ENCODE measurements at regions of chr1 and their contacts with region 1.

Region 1: GRCh38 chr1:108559215-108560186 is at the start of gene EEIG2:
- DNase-seq: peak; percentile 58
- ATAC-seq: peak; percentile 72
- H3K4me3 ChIP-seq: peak within 1 kb of the TSS; percentile 84
- H3K27ac ChIP-seq: peak within 1 kb of the TSS; percentile 75
- H3K4me1 ChIP-seq: peaks cover 29% of the 10 kb centered on the region
- H3K27me3 ChIP-seq: no peaks in the 10 kb centered on the region
- CTCF ChIP-seq: peak; percentile 66 to 82 (median 71); a peak in 5 of 6 replicates
- EP300 ChIP-seq: peak in 1 of 2 experiments; percentile 47; a peak in 1 of 4 replicates
- POLR2A ChIP-seq: peak; percentile 43; the same call in 1 of the 2 replicates
- RAD21 ChIP-seq: peak; percentile 35; the same call in 1 of the 2 replicates
- polyA plus RNA-seq, gene EEIG2: 3.5 to 4.9 TPM

Region 2: DNA sequence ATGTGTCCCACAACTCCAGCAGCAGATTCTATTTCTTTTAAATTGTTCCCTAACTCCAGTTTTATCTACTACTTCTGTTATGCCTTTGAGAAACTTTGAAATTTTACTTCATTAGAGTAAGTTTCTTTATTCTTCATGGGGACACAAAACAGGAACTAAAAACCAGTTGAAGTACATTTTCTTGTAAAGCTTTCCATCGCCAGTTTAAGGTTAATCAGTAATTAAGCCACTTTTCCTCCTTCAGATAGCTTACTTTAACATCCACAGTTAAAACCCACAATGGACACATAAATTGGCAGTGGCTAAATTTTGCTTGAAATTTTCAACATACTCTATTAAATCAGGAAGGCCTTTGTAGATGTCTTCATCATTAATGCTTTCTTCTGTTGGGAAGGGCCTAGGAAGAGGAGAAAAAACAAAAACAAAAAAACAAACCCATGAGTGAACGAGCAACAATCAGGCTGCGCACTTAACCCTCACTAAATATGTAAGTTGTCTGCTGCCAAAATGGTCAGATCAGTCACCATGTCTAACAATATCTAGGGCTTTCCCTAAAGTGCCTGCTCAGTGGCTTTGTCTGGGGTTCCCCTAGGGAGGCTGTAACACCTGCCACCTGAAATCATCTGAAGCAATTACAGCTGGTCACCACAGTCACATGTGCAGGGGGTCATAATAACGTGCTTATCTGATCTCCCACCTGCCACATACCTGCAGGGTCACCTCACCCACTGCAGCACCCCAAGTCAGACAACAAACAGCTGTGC is 782.4 kb before region 1 on chr1:
- CTCF ChIA-PET with region 1: interaction called, 7 read pairs
- POLR2A ChIA-PET with region 1: no interaction called
- RAD21 ChIA-PET with region 1: interaction called, 8 read pairs
- SMC1A ChIA-PET with region 1: no interaction called
- in situ Hi-C with region 1: no loop called
- intact Hi-C with region 1: loop called (anchors 5 kb)
- DNase-seq: peak; percentile 64
- ATAC-seq: peak; percentile 95
- H3K4me3 ChIP-seq: peak overlapping the region; percentile 6; the same call in 1 of the 2 replicates
- H3K27ac ChIP-seq: peak overlapping the region; percentile 61
- H3K4me1 ChIP-seq: peaks cover 11% of the 10 kb centered on the region
- H3K27me3 ChIP-seq: no peaks in the 10 kb centered on the region
- CTCF ChIP-seq: no peak
- EP300 ChIP-seq: peak; percentile 79 to 83; a peak in 3 of 4 replicates
- POLR2A ChIP-seq: no peak
- RAD21 ChIP-seq: no peak

Region 3: DNA sequence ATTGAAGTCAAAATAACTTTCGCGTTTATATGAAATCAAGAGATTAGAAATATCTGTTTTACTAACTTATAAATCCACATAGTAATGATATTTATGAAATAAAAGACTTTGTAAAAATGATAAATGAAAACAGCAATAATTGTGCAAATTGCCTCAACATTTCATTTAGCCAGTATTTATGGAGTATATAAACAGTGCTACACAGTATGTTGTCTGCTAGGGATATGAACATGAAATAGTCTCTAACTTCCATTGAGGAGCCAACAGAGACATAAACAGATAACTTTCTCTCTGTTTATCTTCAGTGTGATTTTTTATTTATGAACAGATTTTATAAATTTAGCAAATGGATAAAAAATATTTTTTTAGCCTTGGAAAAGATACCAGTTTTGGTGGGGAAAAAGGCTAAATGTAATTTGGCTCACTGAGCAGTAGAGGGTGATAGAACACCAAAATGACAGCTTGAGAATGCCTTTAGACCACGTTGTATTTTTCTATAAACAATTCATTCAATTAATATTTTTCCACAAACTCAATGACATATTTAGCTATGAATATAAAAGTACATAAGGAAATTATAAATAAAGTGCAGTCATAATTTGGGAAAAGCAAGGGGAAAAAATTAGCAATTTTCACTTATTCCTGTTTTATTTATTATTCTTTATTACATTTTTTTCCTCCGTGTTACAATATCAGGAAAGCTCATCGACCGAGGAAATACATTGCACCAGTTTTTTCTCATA is 47.1 kb before region 1 on chr1:
- CTCF ChIA-PET with region 1: interaction called, 258 read pairs
- POLR2A ChIA-PET with region 1: interaction called, 3 read pairs
- RAD21 ChIA-PET with region 1: interaction called, 92 read pairs
- SMC1A ChIA-PET with region 1: interaction called, 161 read pairs
- in situ Hi-C with region 1: loop called (anchors 5 kb)
- intact Hi-C with region 1: loop called (anchors 1 kb)
- DNase-seq: no peak
- ATAC-seq: peak; percentile 61; the same call in 2 of the 3 replicates
- H3K4me3 ChIP-seq: no peak overlapping the region
- H3K27ac ChIP-seq: no peak overlapping the region
- H3K4me1 ChIP-seq: no peaks in the 10 kb centered on the region
- H3K27me3 ChIP-seq: no peaks in the 10 kb centered on the region
- CTCF ChIP-seq: peak; percentile 69 to 91 (median 76)
- EP300 ChIP-seq: no peak
- POLR2A ChIP-seq: no peak
- RAD21 ChIP-seq: peak; percentile 95

Region 4: DNA sequence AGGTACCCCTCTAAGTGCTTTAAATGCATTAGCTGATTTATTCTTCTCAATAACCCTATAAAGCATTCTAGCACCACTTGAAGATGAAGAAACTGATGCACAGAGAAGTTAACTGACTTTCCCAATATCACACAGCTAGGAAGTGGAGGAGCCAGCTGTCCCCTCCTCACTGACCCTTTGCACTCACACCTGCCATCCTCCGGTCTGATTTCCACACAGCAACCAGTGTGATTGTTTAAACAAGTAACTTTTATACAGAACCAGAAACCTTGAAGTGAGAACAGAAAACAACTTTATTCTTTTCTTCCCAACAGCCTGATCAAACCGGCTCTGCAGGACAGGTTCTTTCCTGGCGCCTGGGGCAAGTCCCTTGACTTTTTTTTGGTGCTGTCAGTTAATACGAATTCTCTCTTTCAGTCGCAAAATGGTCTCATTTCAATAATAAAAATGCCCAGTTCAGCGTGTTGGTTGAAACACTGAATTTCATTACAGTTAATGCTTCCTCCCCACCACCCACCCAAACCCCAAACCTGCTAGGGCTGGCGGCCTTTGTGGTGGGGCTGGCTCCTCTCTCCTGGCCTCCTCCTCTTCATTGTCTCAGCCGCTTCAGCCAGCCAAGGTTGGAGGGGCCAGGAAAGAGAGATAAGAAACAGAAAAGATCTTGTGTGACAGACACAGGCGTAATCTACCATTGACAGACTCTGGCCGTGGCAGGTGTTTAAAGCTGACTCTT is 26.0 kb before region 1 on chr1:
- CTCF ChIA-PET with region 1: interaction called, 47 read pairs
- POLR2A ChIA-PET with region 1: interaction called, 7 read pairs
- RAD21 ChIA-PET with region 1: interaction called, 33 read pairs
- SMC1A ChIA-PET with region 1: interaction called, 56 read pairs
- in situ Hi-C with region 1: no loop called
- intact Hi-C with region 1: loop called (anchors 2 kb)
- DNase-seq: peak; percentile 40
- ATAC-seq: peak; percentile 80
- H3K4me3 ChIP-seq: no peak overlapping the region
- H3K27ac ChIP-seq: no peak overlapping the region
- H3K4me1 ChIP-seq: peaks cover 6% of the 10 kb centered on the region
- H3K27me3 ChIP-seq: no peaks in the 10 kb centered on the region
- CTCF ChIP-seq: 0 out of 6 replicates have a peak, but pooled peaks of 1 of the 3 experiments have one; percentile 8
- EP300 ChIP-seq: 0 out of 4 replicates have a peak, but pooled peaks of 1 of the 2 experiments have one; percentile 58
- POLR2A ChIP-seq: no peak
- RAD21 ChIP-seq: 0 out of 2 replicates have a peak, but pooled peaks have one; percentile 12

Region 5: GRCh38 chr1:108615544-108615943 is 56.0 kb after region 1 on chr1:
- CTCF ChIA-PET with region 1: interaction called, 12 read pairs
- POLR2A ChIA-PET with region 1: no interaction called
- RAD21 ChIA-PET with region 1: interaction called, 3 read pairs
- SMC1A ChIA-PET with region 1: no interaction called
- in situ Hi-C with region 1: no loop called
- intact Hi-C with region 1: no loop called
- DNase-seq: no peak
- ATAC-seq: no peak
- H3K4me3 ChIP-seq: no peak overlapping the region
- H3K27ac ChIP-seq: no peak overlapping the region
- H3K4me1 ChIP-seq: no peaks in the 10 kb centered on the region
- H3K27me3 ChIP-seq: no peaks in the 10 kb centered on the region
- CTCF ChIP-seq: no peak
- EP300 ChIP-seq: no peak
- POLR2A ChIP-seq: no peak
- RAD21 ChIP-seq: no peak

Region 6: GRCh38 chr1:108661030-108661620 is 101.6 kb after region 1 on chr1 and contains the start of gene HENMT1:
- CTCF ChIA-PET with region 1: interaction called, 3 read pairs
- POLR2A ChIA-PET with region 1: no interaction called
- RAD21 ChIA-PET with region 1: no interaction called
- SMC1A ChIA-PET with region 1: no interaction called
- in situ Hi-C with region 1: no loop called
- intact Hi-C with region 1: loop called (anchors 5 kb)
- DNase-seq: peak; percentile 23
- ATAC-seq: peak; percentile 91
- H3K4me3 ChIP-seq: peak within 1 kb of the TSS; percentile 62
- H3K27ac ChIP-seq: peak within 1 kb of the TSS; percentile 82
- H3K4me1 ChIP-seq: peaks cover 10% of the 10 kb centered on the region; the same call in 1 of the 2 replicates
- H3K27me3 ChIP-seq: no peaks in the 10 kb centered on the region
- CTCF ChIP-seq: no peak
- EP300 ChIP-seq: 0 out of 4 replicates have a peak, but pooled peaks of 1 of the 2 experiments have one; percentile 10
- POLR2A ChIP-seq: peak; percentile 93
- RAD21 ChIP-seq: no peak
- polyA plus RNA-seq, gene HENMT1: 13.6 to 15.2 TPM

Region 7: DNA sequence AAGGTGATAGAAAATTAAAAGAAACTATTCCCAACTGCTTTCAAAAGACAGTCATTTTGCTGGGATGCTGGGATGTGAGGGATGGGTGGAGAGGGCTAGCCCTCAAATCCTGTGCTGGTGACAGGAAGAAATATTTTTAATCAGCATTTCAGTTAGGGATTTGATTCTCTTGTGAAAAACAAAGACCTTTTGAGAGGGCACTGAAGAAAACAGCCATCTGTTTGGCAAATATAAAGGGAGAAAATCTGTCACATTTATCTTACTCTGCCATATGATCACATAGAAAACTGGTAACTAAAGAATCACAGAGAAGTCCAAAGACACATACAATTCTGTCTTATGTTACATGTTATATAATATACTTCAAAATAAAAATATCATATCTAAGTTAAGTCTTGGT is 199.3 kb after region 1 on chr1:
- CTCF ChIA-PET with region 1: no interaction called
- POLR2A ChIA-PET with region 1: no interaction called
- RAD21 ChIA-PET with region 1: no interaction called
- SMC1A ChIA-PET with region 1: no interaction called
- in situ Hi-C with region 1: no loop called
- intact Hi-C with region 1: no loop called
- DNase-seq: no peak
- ATAC-seq: no peak
- H3K4me3 ChIP-seq: no peak overlapping the region
- H3K27ac ChIP-seq: no peak overlapping the region
- H3K4me1 ChIP-seq: no peaks in the 10 kb centered on the region
- H3K27me3 ChIP-seq: no peaks in the 10 kb centered on the region
- CTCF ChIP-seq: no peak
- EP300 ChIP-seq: no peak
- POLR2A ChIP-seq: no peak
- RAD21 ChIP-seq: no peak